Heart left ventricle (tissue), 16 donors: ENCODE measurements at regions of chr21 and their contacts with region 1.

Region 1: GRCh38 chr21:32520875-32521735 is 64.2 kb downstream of the TCP10L start:
- DNase-seq: peak; percentile 93 to 94 (median 94)
- ATAC-seq: peak; percentile 59 to 76 (median 72)
- H3K4me3 ChIP-seq: no peak overlapping the region
- H3K27ac ChIP-seq: peak overlapping the region; percentile 63 to 95 (median 84)
- H3K4me1 ChIP-seq: peaks cover 18 to 74% (median 59%) of the 10 kb centered on the region in 12 donors
- H3K27me3 ChIP-seq: no peaks in the 10 kb centered on the region
- CTCF ChIP-seq: no peak
- POLR2A ChIP-seq: no peak

Region 2: DNA sequence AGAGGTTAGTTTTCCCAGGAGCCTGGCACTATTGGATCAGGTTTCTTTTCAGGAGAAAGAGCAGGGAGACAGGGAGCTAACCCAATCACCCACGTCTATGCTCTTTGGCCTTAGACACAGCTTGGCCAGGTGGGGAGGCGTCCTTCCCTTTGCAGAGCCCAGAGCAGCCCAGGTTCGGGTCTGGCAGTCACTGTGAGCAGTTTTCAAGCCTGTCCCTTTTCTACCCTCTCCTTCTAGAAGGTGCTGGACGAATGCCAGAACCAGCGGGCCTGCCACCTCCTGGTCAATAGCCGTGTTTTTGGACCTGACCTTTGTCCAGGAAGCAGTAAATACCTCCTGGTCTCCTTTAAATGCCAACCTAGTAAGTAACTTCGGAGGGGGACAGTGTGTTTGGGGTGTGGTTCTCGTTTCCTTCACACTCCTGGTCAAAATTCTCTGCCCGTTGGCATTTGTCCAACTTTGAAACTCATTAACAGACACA is 63.7 kb before region 1 on chr21:
- intact Hi-C with region 1: loop called in 1 of 10 experiments (anchors 5 kb)
- DNase-seq: peak; percentile 41 to 71 (median 52)
- ATAC-seq: peak in 3 of 4 donors; percentile 40 to 52 (median 45)
- H3K4me3 ChIP-seq: no peak overlapping the region
- H3K27ac ChIP-seq: peak overlapping the region; percentile 11 to 78 (median 60)
- H3K4me1 ChIP-seq: peaks cover 9 to 36% (median 20%) of the 10 kb centered on the region in 12 donors
- H3K27me3 ChIP-seq: no peaks in the 10 kb centered on the region
- CTCF ChIP-seq: peak in 6 of 12 donors; percentile 11 to 38 (median 15)
- POLR2A ChIP-seq: no peak

Region 3: GRCh38 chr21:32554832-32555436 is 33.8 kb after region 1 on chr21:
- intact Hi-C with region 1: loop called in 6 of 10 experiments (anchors 5 to 10 kb)
- DNase-seq: no peak
- ATAC-seq: peak in 1 of 4 donors; percentile 53
- H3K4me3 ChIP-seq: no peak overlapping the region
- H3K27ac ChIP-seq: peak overlapping the region in 3 of 12 donors; percentile 22 to 63 (median 62)
- H3K4me1 ChIP-seq: peaks cover 0 to 14% (median 1%) of the 10 kb centered on the region in 12 donors
- H3K27me3 ChIP-seq: no peaks in the 10 kb centered on the region
- CTCF ChIP-seq: no peak
- POLR2A ChIP-seq: no peak

Region 4: GRCh38 chr21:32562426-32562825 is 41.3 kb after region 1 on chr21:
- intact Hi-C with region 1: loop called in 7 of 10 experiments (anchors 5 to 10 kb)
- DNase-seq: peak in 4 of 5 donors; percentile 58 to 62 (median 60)
- ATAC-seq: peak; percentile 55 to 84 (median 66)
- H3K4me3 ChIP-seq: no peak overlapping the region
- H3K27ac ChIP-seq: peak overlapping the region in 9 of 12 donors; percentile 5 to 70 (median 56)
- H3K4me1 ChIP-seq: peaks cover 0 to 11% (median 1%) of the 10 kb centered on the region in 12 donors
- H3K27me3 ChIP-seq: no peaks in the 10 kb centered on the region
- CTCF ChIP-seq: peak; percentile 37 to 81 (median 58)
- POLR2A ChIP-seq: no peak

Region 5: GRCh38 chr21:32569261-32570230 is 48.4 kb after region 1 on chr21:
- intact Hi-C with region 1: loop called in 6 of 10 experiments (anchors 5 to 10 kb)
- DNase-seq: peak; percentile 72 to 85 (median 75)
- ATAC-seq: peak; percentile 84 to 94 (median 94)
- H3K4me3 ChIP-seq: peak overlapping the region; percentile 28 to 73 (median 60)
- H3K27ac ChIP-seq: peak overlapping the region; percentile 37 to 88 (median 81)
- H3K4me1 ChIP-seq: peaks cover 0 to 19% (median 4%) of the 10 kb centered on the region in 12 donors
- H3K27me3 ChIP-seq: no peaks in the 10 kb centered on the region
- CTCF ChIP-seq: peak; percentile 64 to 90 (median 83)
- POLR2A ChIP-seq: peak in 1 of 2 donors; percentile 32

Region 6: DNA sequence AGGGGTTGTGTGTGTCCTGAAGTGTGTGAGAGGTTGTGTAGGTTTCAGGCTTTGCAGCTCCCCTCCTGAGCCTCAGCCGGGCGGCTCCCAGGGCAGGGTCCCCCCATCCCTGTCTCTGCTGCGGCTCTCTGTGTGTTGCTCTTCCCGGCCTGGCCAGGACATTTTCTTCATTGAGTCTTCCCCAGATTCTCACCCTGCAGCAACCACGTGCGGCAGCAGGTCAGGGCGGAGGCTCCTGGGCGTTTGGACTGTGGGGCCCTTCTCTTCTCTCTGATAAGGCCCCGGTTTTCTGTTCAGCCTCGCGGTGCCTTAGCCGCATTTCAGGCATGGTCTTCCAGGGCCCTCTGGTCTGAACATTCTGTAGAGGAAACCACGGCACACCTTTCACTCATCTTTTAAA is 66.0 kb after region 1 on chr21:
- intact Hi-C with region 1: no loop called
- DNase-seq: no peak
- ATAC-seq: peak in 1 of 4 donors; percentile 34
- H3K4me3 ChIP-seq: no peak overlapping the region
- H3K27ac ChIP-seq: no peak overlapping the region
- H3K4me1 ChIP-seq: no peaks in the 10 kb centered on the region
- H3K27me3 ChIP-seq: no peaks in the 10 kb centered on the region
- CTCF ChIP-seq: no peak
- POLR2A ChIP-seq: no peak